GM12878 (cell line): ENCODE measurements at regions of chr9 and their contacts with region 1.

Region 1: DNA sequence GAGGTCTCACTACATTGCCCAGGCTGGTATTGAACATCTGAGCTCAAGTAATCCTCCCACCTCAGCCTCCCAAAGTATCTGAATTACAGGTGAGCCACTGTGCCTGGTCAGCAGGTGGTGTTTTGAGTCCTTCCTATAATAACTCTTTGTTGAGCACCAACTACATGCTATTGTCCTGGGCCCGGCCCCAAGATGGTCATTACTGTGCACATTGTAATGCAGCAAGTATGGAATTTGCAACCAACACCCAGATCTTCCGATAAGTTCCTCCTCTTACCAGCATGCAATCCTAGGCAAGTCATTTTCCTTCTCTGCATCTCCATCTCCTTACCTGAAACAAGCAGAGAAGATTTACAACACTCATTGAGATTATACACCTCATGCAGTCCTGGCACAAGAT is 510.3 kb upstream of the KLF4 start:
- DNase-seq: no peak
- ATAC-seq: no peak
- H3K4me3 ChIP-seq: no peak overlapping the region
- H3K27ac ChIP-seq: no peak overlapping the region
- H3K4me1 ChIP-seq: no peaks in the 10 kb centered on the region
- H3K27me3 ChIP-seq: no peaks in the 10 kb centered on the region
- CTCF ChIP-seq: no peak
- EP300 ChIP-seq: no peak
- POLR2A ChIP-seq: no peak
- RAD21 ChIP-seq: no peak

Region 2: DNA sequence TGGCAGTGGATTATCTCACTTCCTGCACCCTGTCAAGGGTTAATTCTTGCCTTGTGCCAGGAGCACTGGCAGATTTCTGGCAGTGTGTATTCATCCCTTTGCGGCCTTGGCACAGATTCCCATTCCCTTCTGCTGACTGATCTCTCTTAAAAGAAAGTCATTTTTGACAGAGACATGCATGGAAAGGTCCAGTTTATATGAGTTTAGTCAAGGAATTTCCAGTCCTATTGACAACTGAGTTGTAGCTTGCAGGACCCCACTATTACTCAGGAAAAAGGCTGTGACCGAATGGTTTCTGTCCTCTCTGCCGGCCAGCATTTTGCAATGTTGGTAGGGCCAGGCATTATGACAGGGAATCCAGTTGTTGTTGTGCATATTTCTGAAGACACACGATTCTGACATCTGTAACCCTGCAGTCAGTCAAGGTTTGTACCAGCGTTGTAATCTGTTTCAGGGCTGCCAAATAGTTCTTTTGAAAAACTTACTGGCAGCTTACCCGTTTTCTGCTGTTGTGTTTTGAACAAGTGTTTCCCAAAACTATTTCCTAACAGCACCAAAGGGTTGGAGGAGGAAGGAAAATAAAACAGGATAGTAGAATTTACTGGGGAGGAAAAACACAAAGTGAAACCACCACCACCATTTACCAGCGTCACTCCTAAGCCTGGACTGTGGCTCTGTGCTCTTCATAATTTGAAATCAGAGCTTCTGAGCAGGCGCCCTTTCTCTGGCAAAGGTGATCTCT is 266.9 kb before region 1 on chr9:
- CTCF ChIA-PET with region 1: no interaction called
- POLR2A ChIA-PET with region 1: no interaction called
- RAD21 ChIA-PET with region 1: no interaction called
- SMC1A ChIA-PET with region 1: no interaction called
- in situ Hi-C with region 1: no loop called
- intact Hi-C with region 1: no loop called
- DNase-seq: no peak
- ATAC-seq: peak; percentile 30; the same call in 2 of the 3 replicates
- H3K4me3 ChIP-seq: no peak overlapping the region
- H3K27ac ChIP-seq: no peak overlapping the region
- H3K4me1 ChIP-seq: no peaks in the 10 kb centered on the region
- H3K27me3 ChIP-seq: no peaks in the 10 kb centered on the region
- CTCF ChIP-seq: no peak
- EP300 ChIP-seq: no peak
- POLR2A ChIP-seq: no peak
- RAD21 ChIP-seq: no peak

Region 3: DNA sequence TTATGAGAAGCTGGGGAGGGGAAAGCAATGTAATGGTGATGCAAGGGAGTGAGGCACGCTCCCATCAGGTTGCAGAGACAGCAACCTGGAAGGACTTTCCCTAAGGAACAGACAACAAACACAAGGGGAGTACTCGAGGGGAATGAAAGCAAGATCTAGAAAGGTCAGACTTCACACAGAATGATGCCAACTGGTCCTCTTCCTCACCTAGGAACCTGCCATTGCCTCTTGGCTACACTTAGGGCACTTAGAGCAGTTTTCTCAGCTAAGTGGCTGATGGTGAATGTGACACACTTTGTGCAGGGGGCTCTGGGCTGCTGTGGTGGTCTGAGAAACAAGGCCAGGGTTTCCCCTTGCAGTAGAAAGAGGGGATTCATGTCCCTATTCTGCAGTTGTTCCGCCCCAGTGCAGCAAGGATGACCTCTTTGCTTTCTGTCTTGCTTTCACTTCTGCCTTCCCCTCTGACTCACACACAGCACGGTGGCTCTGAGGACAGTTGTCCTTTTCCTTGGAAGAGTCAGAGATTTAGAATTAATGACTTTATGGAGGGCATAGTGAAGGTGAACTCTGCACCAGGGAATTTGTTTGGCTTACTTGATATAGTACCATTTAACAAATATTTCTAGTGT is 116.3 kb before region 1 on chr9:
- CTCF ChIA-PET with region 1: no interaction called
- POLR2A ChIA-PET with region 1: no interaction called
- RAD21 ChIA-PET with region 1: no interaction called
- SMC1A ChIA-PET with region 1: no interaction called
- in situ Hi-C with region 1: no loop called
- intact Hi-C with region 1: no loop called
- DNase-seq: no peak
- ATAC-seq: peak; percentile 98
- H3K4me3 ChIP-seq: no peak overlapping the region
- H3K27ac ChIP-seq: peak overlapping the region; percentile 28; the same call in 1 of the 2 replicates
- H3K4me1 ChIP-seq: peaks cover 9% of the 10 kb centered on the region
- H3K27me3 ChIP-seq: no peaks in the 10 kb centered on the region
- CTCF ChIP-seq: no peak
- EP300 ChIP-seq: no peak
- POLR2A ChIP-seq: no peak
- RAD21 ChIP-seq: no peak

Region 4: DNA sequence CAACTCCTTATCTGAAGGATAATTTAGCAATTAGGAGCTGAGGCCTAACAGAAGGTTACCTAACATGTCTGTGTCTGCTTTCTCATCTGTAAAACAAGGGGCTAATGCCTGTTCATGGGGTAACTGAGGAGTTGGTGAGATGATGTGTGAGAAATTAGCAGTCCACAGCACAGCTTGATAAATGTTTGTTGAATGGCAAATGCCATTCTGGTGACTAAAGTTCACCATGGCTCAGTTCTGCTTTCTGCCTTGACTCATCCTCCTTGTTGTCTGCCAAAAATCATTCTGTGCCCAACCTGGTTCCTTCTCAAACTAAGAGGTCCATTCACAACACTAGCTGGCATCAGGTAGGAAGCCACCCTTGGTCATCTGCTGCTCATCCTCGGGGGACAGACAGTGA is 41.7 kb after region 1 on chr9:
- CTCF ChIA-PET with region 1: no interaction called
- POLR2A ChIA-PET with region 1: interaction called, 10 read pairs
- RAD21 ChIA-PET with region 1: no interaction called
- SMC1A ChIA-PET with region 1: no interaction called
- in situ Hi-C with region 1: no loop called
- intact Hi-C with region 1: no loop called
- DNase-seq: no peak
- ATAC-seq: no peak
- H3K4me3 ChIP-seq: no peak overlapping the region
- H3K27ac ChIP-seq: no peak overlapping the region
- H3K4me1 ChIP-seq: no peaks in the 10 kb centered on the region
- H3K27me3 ChIP-seq: no peaks in the 10 kb centered on the region
- CTCF ChIP-seq: no peak
- EP300 ChIP-seq: no peak
- POLR2A ChIP-seq: no peak
- RAD21 ChIP-seq: no peak

Region 5: DNA sequence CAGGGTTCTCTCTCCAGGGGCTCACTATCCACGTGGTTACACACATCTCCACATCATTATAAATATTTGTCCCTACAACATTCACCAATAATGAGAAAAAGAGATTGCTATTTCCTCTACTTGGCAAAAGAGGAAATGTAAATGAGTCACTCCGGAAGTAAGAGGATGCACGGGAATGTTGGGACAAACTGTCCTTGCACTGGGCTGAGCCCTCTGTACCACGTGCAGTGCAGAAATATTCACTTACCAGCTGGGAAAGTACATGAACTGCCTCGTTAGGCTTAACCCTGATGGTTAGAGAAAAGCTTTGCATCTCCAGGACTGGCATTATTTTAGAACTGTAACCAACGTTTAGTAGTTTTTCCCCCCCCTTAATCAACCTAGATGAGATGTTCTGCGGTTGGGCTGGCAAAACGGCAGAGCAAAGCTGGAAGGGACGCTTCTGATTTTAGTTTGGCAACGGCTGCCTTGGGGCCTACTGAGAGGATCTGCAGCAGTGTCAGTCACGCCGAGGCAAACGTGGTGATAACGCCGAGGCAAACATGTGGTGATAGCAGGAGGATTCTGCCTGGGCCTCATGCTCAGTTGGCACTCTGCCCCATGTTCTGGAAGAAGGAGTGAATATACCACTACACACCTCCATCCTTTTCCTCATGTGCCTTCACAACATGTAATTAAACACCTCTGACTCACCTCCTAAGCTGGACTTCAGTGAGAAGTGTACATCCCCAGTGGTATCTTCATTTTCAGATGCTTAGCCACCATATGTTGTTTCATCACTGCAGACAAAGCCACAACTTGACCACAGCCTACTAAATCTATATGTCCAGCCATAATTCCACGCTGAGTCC is 151.1 kb after region 1 on chr9:
- CTCF ChIA-PET with region 1: no interaction called
- POLR2A ChIA-PET with region 1: no interaction called
- RAD21 ChIA-PET with region 1: no interaction called
- SMC1A ChIA-PET with region 1: no interaction called
- in situ Hi-C with region 1: no loop called
- intact Hi-C with region 1: no loop called
- DNase-seq: no peak
- ATAC-seq: no peak
- H3K4me3 ChIP-seq: no peak overlapping the region
- H3K27ac ChIP-seq: no peak overlapping the region
- H3K4me1 ChIP-seq: no peaks in the 10 kb centered on the region
- H3K27me3 ChIP-seq: no peaks in the 10 kb centered on the region
- CTCF ChIP-seq: no peak
- EP300 ChIP-seq: no peak
- POLR2A ChIP-seq: no peak
- RAD21 ChIP-seq: no peak